ENCODE measurements at regions of chr10 and their contacts with region 1.

Region 1: DNA sequence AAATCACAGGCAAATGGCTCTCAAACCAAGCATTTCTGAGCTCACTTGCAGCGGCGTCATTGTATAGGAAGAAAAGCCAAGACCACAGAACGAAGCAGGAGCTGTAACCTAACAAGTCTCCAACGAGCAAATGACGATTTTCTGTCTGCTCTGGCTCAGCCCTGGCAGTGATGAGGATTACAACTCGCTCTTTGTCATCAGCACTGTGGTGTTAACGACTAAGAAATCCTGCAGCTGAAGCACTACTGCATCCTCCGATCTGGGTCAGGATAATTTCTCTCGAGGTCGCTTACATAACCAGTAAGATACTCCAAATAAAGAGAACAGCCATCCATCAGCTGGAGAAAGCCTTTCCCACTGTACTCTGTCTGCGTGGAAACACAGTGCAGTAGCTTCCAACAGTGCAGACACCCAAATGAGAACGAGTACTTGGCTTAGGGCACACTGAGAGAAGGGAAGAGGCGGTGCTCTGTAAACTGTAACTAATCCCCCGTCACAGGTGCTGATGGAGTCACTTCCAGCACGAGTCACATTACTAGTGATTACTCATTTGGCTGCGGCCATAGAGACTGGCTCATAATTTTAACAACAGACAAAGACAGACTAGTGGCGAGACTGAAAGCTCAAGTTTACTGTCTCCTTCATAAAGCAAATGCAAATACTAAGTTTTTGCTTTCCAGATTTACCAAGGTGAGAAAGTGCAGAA is 135.8 kb downstream of the NRBF2 start:
- DNase-seq: peak; percentile 60 to 96 (median 70)
- ATAC-seq: peak; percentile 88
- H3K4me3 ChIP-seq: peak overlapping the region; percentile 83
- H3K4me3 Mint-ChIP-seq: peak overlapping the region; percentile 98
- H3K27ac ChIP-seq: peak overlapping the region; percentile 82 to 94
- H3K27ac Mint-ChIP-seq: peak overlapping the region; percentile 98
- H3K4me1 ChIP-seq: peaks cover 5% of the 10 kb centered on the region
- H3K4me1 Mint-ChIP-seq: peaks cover 28% of the 10 kb centered on the region
- H3K27me3 ChIP-seq: no peaks in the 10 kb centered on the region
- H3K27me3 Mint-ChIP-seq: no peaks in the 10 kb centered on the region
- CTCF ChIP-seq: peak; percentile 14

Region 2: GRCh38 chr10:63133056-63133820 is 135.7 kb before region 1 on chr10 and contains the start of gene NRBF2:
- CTCF ChIA-PET with region 1: no interaction called
- POLR2A ChIA-PET with region 1: interaction called, 11 read pairs
- intact Hi-C with region 1: loop called in 1 of 2 experiments (anchors 5 kb)
- DNase-seq: peak; percentile 91 to 99 (median 95)
- ATAC-seq: peak; percentile 90
- H3K4me3 ChIP-seq: peak within 1 kb of the TSS; percentile 89
- H3K4me3 Mint-ChIP-seq: peak within 1 kb of the TSS; percentile 94
- H3K27ac ChIP-seq: peak within 1 kb of the TSS; percentile 97 to 98
- H3K27ac Mint-ChIP-seq: peak within 1 kb of the TSS; percentile 88
- H3K4me1 ChIP-seq: peaks cover 44% of the 10 kb centered on the region
- H3K4me1 Mint-ChIP-seq: peaks cover 45% of the 10 kb centered on the region
- H3K27me3 ChIP-seq: no peaks in the 10 kb centered on the region
- H3K27me3 Mint-ChIP-seq: peaks cover 9% of the 10 kb centered on the region
- CTCF ChIP-seq: peak; percentile 22
- total RNA-seq, gene NRBF2: 25.3 to 25.6 TPM

Region 3: GRCh38 chr10:63155388-63156020 is 113.4 kb before region 1 on chr10:
- CTCF ChIA-PET with region 1: no interaction called
- POLR2A ChIA-PET with region 1: no interaction called
- intact Hi-C with region 1: no loop called
- DNase-seq: no peak
- ATAC-seq: no peak
- H3K4me3 ChIP-seq: no peak overlapping the region
- H3K4me3 Mint-ChIP-seq: no peak overlapping the region
- H3K27ac ChIP-seq: no peak overlapping the region
- H3K27ac Mint-ChIP-seq: no peak overlapping the region
- H3K4me1 ChIP-seq: no peaks in the 10 kb centered on the region
- H3K4me1 Mint-ChIP-seq: peaks cover 8% of the 10 kb centered on the region
- H3K27me3 ChIP-seq: no peaks in the 10 kb centered on the region
- H3K27me3 Mint-ChIP-seq: no peaks in the 10 kb centered on the region
- CTCF ChIP-seq: no peak

Region 4: DNA sequence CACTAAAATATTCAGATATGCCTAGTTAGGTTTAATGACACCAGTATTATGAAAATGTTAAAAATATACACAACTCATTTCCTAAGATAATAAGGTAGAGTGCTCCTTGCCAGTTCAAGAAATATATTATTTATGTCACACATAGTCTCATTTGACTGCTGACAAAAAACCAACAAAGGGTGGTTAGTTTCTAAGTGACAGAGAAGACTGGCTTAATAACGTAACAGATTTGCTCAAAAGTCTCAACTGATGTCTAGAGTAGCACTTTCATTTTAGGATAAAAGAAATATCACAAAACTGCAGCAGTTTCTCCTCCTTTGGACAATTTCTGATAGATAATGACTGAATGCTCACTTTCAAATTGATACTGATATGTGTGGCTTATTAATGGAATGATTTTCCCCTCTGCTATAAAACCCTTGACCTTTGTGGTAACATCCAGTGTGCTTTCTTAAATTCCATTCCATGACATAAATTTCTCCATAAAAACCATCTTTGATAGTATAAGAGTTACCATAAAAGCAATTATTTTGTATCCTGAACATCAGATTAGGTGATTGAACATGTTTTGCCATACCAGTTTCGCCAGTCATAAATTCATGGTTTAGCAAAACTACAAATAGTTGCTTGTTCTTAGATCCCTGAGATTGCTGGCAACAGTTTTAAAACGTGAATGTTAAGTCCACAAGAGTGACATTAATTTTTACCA is 41.6 kb before region 1 on chr10:
- CTCF ChIA-PET with region 1: no interaction called
- POLR2A ChIA-PET with region 1: interaction called, 31 read pairs
- intact Hi-C with region 1: loop called (anchors 2 to 5 kb)
- DNase-seq: peak in 3 of 14 experiments; percentile 42 to 51 (median 43)
- ATAC-seq: peak; percentile 19
- H3K4me3 ChIP-seq: no peak overlapping the region
- H3K4me3 Mint-ChIP-seq: peak overlapping the region; percentile 40
- H3K27ac ChIP-seq: peak overlapping the region in 1 of 2 donors; percentile 41
- H3K27ac Mint-ChIP-seq: peak overlapping the region; percentile 84
- H3K4me1 ChIP-seq: peaks cover 24% of the 10 kb centered on the region
- H3K4me1 Mint-ChIP-seq: peaks cover 81% of the 10 kb centered on the region
- H3K27me3 ChIP-seq: no peaks in the 10 kb centered on the region
- H3K27me3 Mint-ChIP-seq: no peaks in the 10 kb centered on the region
- CTCF ChIP-seq: no peak

Region 5: DNA sequence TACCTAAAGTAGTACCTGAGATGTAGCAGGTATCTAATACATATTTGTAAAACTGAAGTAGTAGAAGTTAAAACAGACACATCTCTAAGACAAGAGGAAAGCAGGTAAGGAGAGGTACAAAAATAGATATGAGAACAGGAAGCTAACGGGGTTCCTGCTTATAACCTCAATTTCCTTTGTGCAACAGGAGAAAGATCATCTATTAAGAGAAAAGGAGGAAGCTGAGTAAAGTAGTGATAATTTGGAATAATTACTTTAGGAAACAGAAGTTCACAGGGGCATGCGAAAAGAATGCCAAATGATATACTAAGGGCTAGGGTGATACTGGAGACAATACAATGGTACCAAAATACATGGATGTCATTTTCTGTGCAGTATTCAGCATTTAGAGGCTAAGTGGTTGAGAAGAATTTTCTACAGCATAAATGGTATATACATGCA is 27.1 kb before region 1 on chr10:
- CTCF ChIA-PET with region 1: interaction called, 5 read pairs
- POLR2A ChIA-PET with region 1: interaction called, 17 read pairs
- intact Hi-C with region 1: loop called in 1 of 2 experiments (anchors 2 kb)
- DNase-seq: peak in 2 of 14 experiments; percentile 17 to 65
- ATAC-seq: peak; percentile 51
- H3K4me3 ChIP-seq: peak overlapping the region; percentile 22
- H3K4me3 Mint-ChIP-seq: peak overlapping the region; percentile 63
- H3K27ac ChIP-seq: peak overlapping the region in 1 of 2 donors; percentile 59
- H3K27ac Mint-ChIP-seq: peak overlapping the region; percentile 70
- H3K4me1 ChIP-seq: peaks cover 37% of the 10 kb centered on the region
- H3K4me1 Mint-ChIP-seq: peaks cover 84% of the 10 kb centered on the region
- H3K27me3 ChIP-seq: no peaks in the 10 kb centered on the region
- H3K27me3 Mint-ChIP-seq: no peaks in the 10 kb centered on the region
- CTCF ChIP-seq: no peak

Region 6: DNA sequence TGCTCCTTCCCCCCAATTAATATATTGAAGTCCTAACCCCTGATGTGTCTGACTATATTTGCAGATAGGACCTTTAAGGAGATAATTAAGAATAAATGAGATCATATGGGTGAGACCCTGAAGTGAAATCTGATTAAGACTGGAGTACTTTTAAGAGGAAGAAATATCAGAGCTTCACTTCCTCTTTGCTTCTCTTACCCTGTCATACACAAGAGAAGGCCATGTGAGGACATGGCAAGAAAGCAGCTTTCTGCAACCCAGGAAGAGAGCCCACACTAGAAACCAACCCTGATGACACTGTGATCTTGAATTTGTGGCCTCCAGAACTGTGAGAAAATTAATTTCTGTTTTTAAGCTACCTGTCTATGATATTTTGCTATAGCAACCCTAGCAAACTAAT is 152.6 kb after region 1 on chr10:
- CTCF ChIA-PET with region 1: no interaction called
- POLR2A ChIA-PET with region 1: interaction called, 11 read pairs
- intact Hi-C with region 1: no loop called
- DNase-seq: peak in 5 of 14 experiments; percentile 10 to 56 (median 54)
- ATAC-seq: peak; percentile 96
- H3K4me3 ChIP-seq: no peak overlapping the region
- H3K4me3 Mint-ChIP-seq: peak overlapping the region; percentile 48
- H3K27ac ChIP-seq: peak overlapping the region; percentile 18 to 41
- H3K27ac Mint-ChIP-seq: peak overlapping the region; percentile 90
- H3K4me1 ChIP-seq: peaks cover 13% of the 10 kb centered on the region
- H3K4me1 Mint-ChIP-seq: peaks cover 55% of the 10 kb centered on the region
- H3K27me3 ChIP-seq: no peaks in the 10 kb centered on the region
- H3K27me3 Mint-ChIP-seq: no peaks in the 10 kb centered on the region
- CTCF ChIP-seq: no peak

Region 7: GRCh38 chr10:63521416-63522276 is 252.7 kb after region 1 on chr10:
- CTCF ChIA-PET with region 1: interaction called, 4 read pairs
- POLR2A ChIA-PET with region 1: interaction called, 53 read pairs
- intact Hi-C with region 1: loop called (anchors 2 to 5 kb)
- DNase-seq: peak; percentile 18 to 87 (median 40)
- ATAC-seq: peak; percentile 71
- H3K4me3 ChIP-seq: peak overlapping the region; percentile 87
- H3K4me3 Mint-ChIP-seq: peak overlapping the region; percentile 87
- H3K27ac ChIP-seq: peak overlapping the region; percentile 68 to 81
- H3K27ac Mint-ChIP-seq: peak overlapping the region; percentile 86
- H3K4me1 ChIP-seq: peaks cover 20% of the 10 kb centered on the region
- H3K4me1 Mint-ChIP-seq: peaks cover 71% of the 10 kb centered on the region
- H3K27me3 ChIP-seq: no peaks in the 10 kb centered on the region
- H3K27me3 Mint-ChIP-seq: no peaks in the 10 kb centered on the region
- CTCF ChIP-seq: no peak

Measured in CD4-positive, alpha-beta T cell (primary cell).